MCF 10A (cell line): ENCODE measurements at regions of chr4 and their contacts with region 1.

Region 1: GRCh38 chr4:78517050-78517652 is 34.4 kb upstream of the ANXA3 start:
- DNase-seq: peak; percentile 50
- H3K4me3 Mint-ChIP-seq: no peak overlapping the region
- H3K27ac Mint-ChIP-seq: no peak overlapping the region
- H3K4me1 Mint-ChIP-seq: no peaks in the 10 kb centered on the region
- H3K27me3 Mint-ChIP-seq: no peaks in the 10 kb centered on the region
- CTCF ChIP-seq: peak; percentile 50

Region 2: GRCh38 chr4:77959566-77960338 is 557.4 kb before region 1 on chr4:
- CTCF ChIA-PET with region 1: interaction called, 66 read pairs
- POLR2A ChIA-PET with region 1: no interaction called
- intact Hi-C with region 1: loop called (anchors 1 kb)
- DNase-seq: peak; percentile 54
- H3K4me3 Mint-ChIP-seq: no peak overlapping the region
- H3K27ac Mint-ChIP-seq: no peak overlapping the region
- H3K4me1 Mint-ChIP-seq: no peaks in the 10 kb centered on the region
- H3K27me3 Mint-ChIP-seq: no peaks in the 10 kb centered on the region
- CTCF ChIP-seq: peak; percentile 63

Region 3: GRCh38 chr4:77994194-77994721 is 522.9 kb before region 1 on chr4:
- CTCF ChIA-PET with region 1: interaction called, 18 read pairs
- POLR2A ChIA-PET with region 1: no interaction called
- intact Hi-C with region 1: loop called (anchors 1 kb)
- DNase-seq: peak; percentile 78
- H3K4me3 Mint-ChIP-seq: no peak overlapping the region
- H3K27ac Mint-ChIP-seq: no peak overlapping the region
- H3K4me1 Mint-ChIP-seq: peaks cover 6% of the 10 kb centered on the region
- H3K27me3 Mint-ChIP-seq: no peaks in the 10 kb centered on the region
- CTCF ChIP-seq: peak; percentile 45

Region 4: DNA sequence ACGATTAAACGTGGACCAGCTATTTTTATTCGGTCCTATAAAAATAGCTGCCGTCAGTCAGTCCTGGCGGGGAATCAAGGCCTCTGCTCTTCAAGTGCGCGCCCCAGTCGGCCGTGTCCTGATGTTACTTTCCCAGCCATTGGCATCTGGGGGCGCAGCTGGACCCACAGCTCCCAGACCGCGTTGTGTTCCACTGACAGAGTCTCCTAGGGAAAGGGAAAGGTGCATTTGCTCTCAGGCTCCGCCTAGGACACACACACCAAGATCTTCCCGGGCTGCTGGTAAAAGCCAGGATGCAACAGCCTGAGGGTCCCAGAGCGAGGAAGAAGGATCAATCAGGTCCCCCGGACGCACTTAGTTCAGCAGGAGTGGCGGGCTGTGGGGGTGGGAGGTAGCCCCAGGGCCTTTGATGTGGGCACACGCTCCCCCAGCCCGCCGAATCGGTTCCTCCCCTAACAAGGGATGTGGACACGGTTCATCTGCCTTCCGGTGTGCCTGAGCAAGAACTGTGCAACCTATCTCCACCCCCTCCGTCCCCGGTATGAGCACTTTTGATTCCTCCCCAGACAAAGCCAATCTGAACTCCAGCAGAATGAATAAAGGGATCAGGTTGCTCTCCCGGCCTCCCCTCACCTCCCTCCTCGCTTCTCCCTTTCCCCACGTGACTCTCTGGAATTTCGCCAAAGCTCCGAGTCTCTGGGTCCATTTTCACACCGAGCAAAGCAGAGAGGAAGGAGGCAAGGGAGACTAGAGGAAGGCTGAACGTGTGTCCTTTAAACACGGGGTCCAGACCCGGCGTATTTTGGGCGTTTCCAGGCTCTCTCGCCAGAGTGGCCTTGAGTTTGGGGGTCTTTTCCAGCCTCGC is 460.7 kb before region 1 on chr4:
- CTCF ChIA-PET with region 1: interaction called, 30 read pairs
- POLR2A ChIA-PET with region 1: interaction called, 3 read pairs
- intact Hi-C with region 1: loop called (anchors 1 kb)
- DNase-seq: peak; percentile 98
- H3K4me3 Mint-ChIP-seq: peak overlapping the region; percentile 78
- H3K27ac Mint-ChIP-seq: no peak overlapping the region
- H3K4me1 Mint-ChIP-seq: peaks cover 6% of the 10 kb centered on the region
- H3K27me3 Mint-ChIP-seq: no peaks in the 10 kb centered on the region
- CTCF ChIP-seq: no peak